ENCODE measurements at regions of chr6 and their contacts with region 1.

Region 1: GRCh38 chr6:100228831-100229641 is 235.0 kb upstream of the MCHR2 start:
- DNase-seq: peak; percentile 62
- H3K4me3 Mint-ChIP-seq: peak overlapping the region; percentile 72
- H3K27ac Mint-ChIP-seq: peak overlapping the region; percentile 85
- H3K4me1 Mint-ChIP-seq: peaks cover 29% of the 10 kb centered on the region
- H3K27me3 Mint-ChIP-seq: peaks cover 3% of the 10 kb centered on the region

Region 2: GRCh38 chr6:100126790-100127484 is 102.1 kb before region 1 on chr6:
- intact Hi-C with region 1: loop called (anchors 2 kb)
- DNase-seq: no peak
- H3K4me3 Mint-ChIP-seq: no peak overlapping the region
- H3K27ac Mint-ChIP-seq: peak overlapping the region; percentile 77
- H3K4me1 Mint-ChIP-seq: peaks cover 19% of the 10 kb centered on the region
- H3K27me3 Mint-ChIP-seq: no peaks in the 10 kb centered on the region

Region 3: GRCh38 chr6:100171533-100172321 is 57.3 kb before region 1 on chr6:
- intact Hi-C with region 1: loop called (anchors 1 kb)
- DNase-seq: peak; percentile 28
- H3K4me3 Mint-ChIP-seq: no peak overlapping the region
- H3K27ac Mint-ChIP-seq: peak overlapping the region; percentile 55
- H3K4me1 Mint-ChIP-seq: peaks cover 60% of the 10 kb centered on the region
- H3K27me3 Mint-ChIP-seq: no peaks in the 10 kb centered on the region

Region 4: GRCh38 chr6:100257793-100258395 is 28.9 kb after region 1 on chr6:
- intact Hi-C with region 1: loop called (anchors 2 kb)
- DNase-seq: no peak
- H3K4me3 Mint-ChIP-seq: peak overlapping the region; percentile 54
- H3K27ac Mint-ChIP-seq: no peak overlapping the region
- H3K4me1 Mint-ChIP-seq: peaks cover 18% of the 10 kb centered on the region
- H3K27me3 Mint-ChIP-seq: peaks cover 5% of the 10 kb centered on the region

Region 5: DNA sequence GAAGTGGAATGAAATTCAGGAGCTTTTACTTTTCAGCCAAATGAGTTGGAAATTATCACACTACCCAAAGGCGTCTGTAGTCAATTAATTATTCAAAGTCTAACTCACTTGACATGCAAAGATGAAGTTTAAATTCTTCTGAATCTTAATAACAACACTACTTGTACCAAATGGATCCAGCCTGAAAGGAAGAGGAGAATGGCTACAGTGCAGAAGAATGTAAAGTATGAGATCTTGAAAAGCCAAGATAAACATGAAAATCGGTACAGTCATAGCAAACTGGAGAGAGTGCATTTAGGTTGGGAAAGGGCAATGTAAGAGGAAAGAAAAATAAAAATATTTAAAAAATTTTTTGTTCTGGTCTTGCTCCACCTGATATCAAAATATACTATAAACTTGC is 40.2 kb after region 1 on chr6:
- intact Hi-C with region 1: no loop called
- DNase-seq: no peak
- H3K4me3 Mint-ChIP-seq: no peak overlapping the region
- H3K27ac Mint-ChIP-seq: no peak overlapping the region
- H3K4me1 Mint-ChIP-seq: no peaks in the 10 kb centered on the region
- H3K27me3 Mint-ChIP-seq: peaks cover 19% of the 10 kb centered on the region

Region 6: GRCh38 chr6:100347901-100348550 is 119.0 kb after region 1 on chr6:
- intact Hi-C with region 1: loop called (anchors 2 kb)
- DNase-seq: no peak
- H3K4me3 Mint-ChIP-seq: no peak overlapping the region
- H3K27ac Mint-ChIP-seq: no peak overlapping the region
- H3K4me1 Mint-ChIP-seq: peaks cover 17% of the 10 kb centered on the region
- H3K27me3 Mint-ChIP-seq: peaks cover 5% of the 10 kb centered on the region

Region 7: GRCh38 chr6:100472674-100473073 is 243.6 kb after region 1 on chr6:
- intact Hi-C with region 1: loop called (anchors 2 kb)
- DNase-seq: peak; percentile 36
- H3K4me3 Mint-ChIP-seq: no peak overlapping the region
- H3K27ac Mint-ChIP-seq: peak overlapping the region; percentile 29
- H3K4me1 Mint-ChIP-seq: peaks cover 34% of the 10 kb centered on the region
- H3K27me3 Mint-ChIP-seq: peaks cover 52% of the 10 kb centered on the region